Activated CD4-positive, alpha-beta memory T cell treated with anti-CD3 and anti-CD28 coated beads, Interleukin-2, amount 10 ng/mL, durations not matched to agents 7 days and 5 days (primary cell): ENCODE measurements at regions of chr14 and their contacts with region 1.

Region 1: GRCh38 chr14:74612350-74613021 is 449 bp upstream of the LTBP2 start:
- DNase-seq: peak; percentile 84
- H3K4me3 Mint-ChIP-seq: peak overlapping the region; percentile 63
- H3K27ac Mint-ChIP-seq: no peak overlapping the region
- H3K4me1 Mint-ChIP-seq: peaks cover 34% of the 10 kb centered on the region
- H3K27me3 Mint-ChIP-seq: peaks cover 58% of the 10 kb centered on the region

Region 2: GRCh38 chr14:74437496-74438053 is 174.9 kb before region 1 on chr14:
- CTCF ChIA-PET with region 1: no interaction called
- POLR2A ChIA-PET with region 1: no interaction called
- DNase-seq: no peak
- H3K4me3 Mint-ChIP-seq: no peak overlapping the region
- H3K27ac Mint-ChIP-seq: no peak overlapping the region
- H3K4me1 Mint-ChIP-seq: no peaks in the 10 kb centered on the region
- H3K27me3 Mint-ChIP-seq: peaks cover 39% of the 10 kb centered on the region

Region 3: DNA sequence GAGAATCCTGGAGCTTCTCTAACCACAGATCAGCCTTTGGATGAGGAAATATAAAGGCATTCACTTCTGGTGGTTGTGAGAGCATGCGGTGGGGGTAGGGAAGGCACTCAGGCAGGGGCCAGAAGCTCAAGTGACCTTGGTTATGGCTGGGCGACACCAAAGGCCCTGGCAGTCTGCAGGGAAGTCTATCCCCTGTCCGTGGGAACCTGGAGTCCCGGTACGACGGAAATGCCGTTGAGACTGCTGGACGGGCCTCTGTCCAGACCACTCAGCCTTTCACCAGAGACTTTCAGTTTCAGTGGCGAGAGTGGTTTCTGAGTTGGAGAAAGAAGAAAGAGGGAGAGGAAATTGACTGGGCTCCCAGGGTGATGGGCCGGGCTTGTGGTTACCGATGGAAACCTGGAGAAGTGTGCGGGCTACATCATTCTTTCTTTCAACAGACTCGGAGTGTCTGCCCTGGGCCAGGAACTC is 98.0 kb before region 1 on chr14:
- CTCF ChIA-PET with region 1: no interaction called
- POLR2A ChIA-PET with region 1: no interaction called
- DNase-seq: no peak
- H3K4me3 Mint-ChIP-seq: no peak overlapping the region
- H3K27ac Mint-ChIP-seq: no peak overlapping the region
- H3K4me1 Mint-ChIP-seq: peaks cover 9% of the 10 kb centered on the region
- H3K27me3 Mint-ChIP-seq: peaks cover 35% of the 10 kb centered on the region

Region 4: DNA sequence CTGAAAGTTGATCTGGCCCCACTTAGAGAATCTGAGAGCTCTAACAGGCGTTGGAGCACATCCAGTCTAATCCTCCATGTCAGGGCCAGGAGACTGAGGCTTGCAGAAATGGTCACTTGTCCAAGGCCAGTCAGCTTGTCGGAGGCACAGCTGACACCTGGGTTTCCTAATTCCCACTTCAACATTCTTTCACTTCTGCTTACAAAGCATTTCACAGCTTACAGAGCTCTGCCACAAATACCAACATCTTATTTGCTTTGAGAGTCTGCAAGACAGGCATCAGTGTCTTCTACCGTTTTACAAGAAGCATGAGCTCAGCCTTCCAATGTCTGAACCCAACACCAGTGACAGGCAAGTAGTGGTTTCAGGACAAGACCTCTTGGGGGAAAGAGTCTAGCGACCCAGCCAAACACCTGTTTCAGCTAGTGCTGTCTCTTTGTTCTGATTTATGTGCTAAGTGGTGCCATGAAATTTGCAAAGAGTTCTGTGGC is 87.1 kb before region 1 on chr14:
- CTCF ChIA-PET with region 1: no interaction called
- POLR2A ChIA-PET with region 1: no interaction called
- DNase-seq: no peak
- H3K4me3 Mint-ChIP-seq: no peak overlapping the region
- H3K27ac Mint-ChIP-seq: no peak overlapping the region
- H3K4me1 Mint-ChIP-seq: no peaks in the 10 kb centered on the region
- H3K27me3 Mint-ChIP-seq: peaks cover 13% of the 10 kb centered on the region

Region 5: GRCh38 chr14:74571901-74572725 is 40.4 kb before region 1 on chr14:
- CTCF ChIA-PET with region 1: interaction called, 29 read pairs
- POLR2A ChIA-PET with region 1: interaction called, 4 read pairs
- DNase-seq: no peak
- H3K4me3 Mint-ChIP-seq: no peak overlapping the region
- H3K27ac Mint-ChIP-seq: no peak overlapping the region
- H3K4me1 Mint-ChIP-seq: peaks cover 41% of the 10 kb centered on the region
- H3K27me3 Mint-ChIP-seq: peaks cover 52% of the 10 kb centered on the region

Region 6: DNA sequence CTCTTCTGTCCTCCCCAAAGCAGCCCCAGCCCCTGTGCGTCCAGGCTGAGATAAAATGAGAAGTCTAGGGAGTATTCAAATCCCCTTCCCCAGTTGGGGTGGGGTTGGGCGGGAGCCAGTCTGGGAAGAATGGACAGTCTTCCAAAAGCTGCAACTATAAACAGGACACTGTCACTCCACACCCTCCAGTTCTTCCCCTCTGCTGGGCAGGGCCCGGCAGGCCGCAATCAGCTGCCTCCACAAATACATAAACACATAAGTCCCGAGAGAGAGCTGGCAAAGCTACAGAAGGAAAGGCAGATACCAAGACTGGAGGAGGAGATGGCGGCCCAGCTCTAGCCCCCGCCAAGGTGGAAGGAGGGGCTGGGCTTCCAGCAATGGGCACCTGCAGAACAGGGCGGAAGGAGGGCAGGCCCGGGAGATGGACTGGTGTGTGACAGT is 13.1 kb before region 1 on chr14:
- CTCF ChIA-PET with region 1: interaction called, 10 read pairs
- POLR2A ChIA-PET with region 1: no interaction called
- DNase-seq: no peak
- H3K4me3 Mint-ChIP-seq: no peak overlapping the region
- H3K27ac Mint-ChIP-seq: no peak overlapping the region
- H3K4me1 Mint-ChIP-seq: no peaks in the 10 kb centered on the region
- H3K27me3 Mint-ChIP-seq: peaks cover 13% of the 10 kb centered on the region

Region 7: DNA sequence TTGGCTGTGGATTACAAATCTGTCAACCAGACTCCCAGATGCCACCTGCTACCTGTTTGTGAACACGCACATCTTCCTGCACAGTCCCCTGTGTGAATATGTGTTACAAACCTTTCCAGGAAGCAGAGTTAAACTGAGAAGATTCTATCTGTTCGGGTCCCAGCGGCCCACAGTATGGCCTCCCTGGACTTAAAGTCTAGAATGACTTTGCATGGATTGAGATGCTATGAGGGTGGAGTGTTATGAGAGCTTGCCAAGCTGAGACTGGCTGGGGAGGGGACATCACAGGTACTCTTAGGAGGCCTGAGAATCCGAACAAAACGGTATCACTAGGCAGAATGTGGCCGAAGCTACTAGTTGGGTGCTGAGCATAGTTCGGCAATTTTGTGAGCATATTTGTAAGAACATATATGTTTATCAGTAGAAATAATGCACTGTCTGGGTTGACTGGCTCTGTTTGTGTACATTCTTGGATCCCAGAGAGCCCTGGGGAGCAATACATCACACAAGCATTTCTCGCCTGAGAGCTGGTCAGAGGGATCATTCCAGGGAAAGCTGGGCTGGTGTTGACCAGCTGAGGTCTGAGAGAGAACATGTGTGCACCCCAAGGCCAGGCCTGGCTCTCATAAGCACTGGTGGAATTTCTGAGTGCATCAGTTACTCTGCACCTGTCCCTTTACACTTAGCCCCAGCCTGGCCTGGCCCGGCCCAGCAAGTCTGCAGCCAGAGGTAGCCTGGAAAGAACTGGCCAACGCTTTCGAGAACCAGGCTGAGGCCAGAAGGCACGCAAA is 29.3 kb after region 1 on chr14:
- CTCF ChIA-PET with region 1: interaction called, 20 read pairs
- POLR2A ChIA-PET with region 1: interaction called, 4 read pairs
- DNase-seq: no peak
- H3K4me3 Mint-ChIP-seq: no peak overlapping the region
- H3K27ac Mint-ChIP-seq: no peak overlapping the region
- H3K4me1 Mint-ChIP-seq: no peaks in the 10 kb centered on the region
- H3K27me3 Mint-ChIP-seq: peaks cover 17% of the 10 kb centered on the region

Region 8: DNA sequence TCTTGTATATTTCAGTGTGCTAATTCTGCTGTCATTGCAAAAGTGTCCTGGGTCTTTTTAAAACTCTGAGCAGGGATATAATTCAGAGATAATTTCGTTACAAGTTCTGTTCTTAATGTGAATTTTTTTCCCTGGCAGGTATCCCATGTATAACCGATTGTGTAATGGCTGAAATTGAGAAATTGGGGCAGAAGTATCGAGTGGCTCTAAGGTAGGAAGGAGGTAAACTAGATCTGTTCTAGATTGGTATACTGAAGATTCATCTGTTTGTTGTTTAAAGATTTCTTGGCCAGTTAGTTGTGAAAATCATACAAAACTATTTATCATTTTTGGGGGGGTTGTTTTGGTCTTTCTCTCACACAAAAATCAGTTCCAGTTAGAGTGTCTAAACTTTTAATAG is 110.6 kb after region 1 on chr14:
- CTCF ChIA-PET with region 1: no interaction called
- POLR2A ChIA-PET with region 1: no interaction called
- DNase-seq: no peak
- H3K4me3 Mint-ChIP-seq: no peak overlapping the region
- H3K27ac Mint-ChIP-seq: no peak overlapping the region
- H3K4me1 Mint-ChIP-seq: no peaks in the 10 kb centered on the region
- H3K27me3 Mint-ChIP-seq: no peaks in the 10 kb centered on the region

Region 9: GRCh38 chr14:74762917-74763802 is 150.7 kb after region 1 on chr14 and contains the start of gene YLPM1:
- CTCF ChIA-PET with region 1: interaction called, 16 read pairs
- POLR2A ChIA-PET with region 1: interaction called, 8 read pairs
- DNase-seq: peak; percentile 92
- H3K4me3 Mint-ChIP-seq: peak within 1 kb of the TSS; percentile 87
- H3K27ac Mint-ChIP-seq: peak within 1 kb of the TSS; percentile 77
- H3K4me1 Mint-ChIP-seq: peaks cover 43% of the 10 kb centered on the region
- H3K27me3 Mint-ChIP-seq: no peaks in the 10 kb centered on the region
- total RNA-seq, gene YLPM1: 52.3 to 55.4 TPM

Region 10: DNA sequence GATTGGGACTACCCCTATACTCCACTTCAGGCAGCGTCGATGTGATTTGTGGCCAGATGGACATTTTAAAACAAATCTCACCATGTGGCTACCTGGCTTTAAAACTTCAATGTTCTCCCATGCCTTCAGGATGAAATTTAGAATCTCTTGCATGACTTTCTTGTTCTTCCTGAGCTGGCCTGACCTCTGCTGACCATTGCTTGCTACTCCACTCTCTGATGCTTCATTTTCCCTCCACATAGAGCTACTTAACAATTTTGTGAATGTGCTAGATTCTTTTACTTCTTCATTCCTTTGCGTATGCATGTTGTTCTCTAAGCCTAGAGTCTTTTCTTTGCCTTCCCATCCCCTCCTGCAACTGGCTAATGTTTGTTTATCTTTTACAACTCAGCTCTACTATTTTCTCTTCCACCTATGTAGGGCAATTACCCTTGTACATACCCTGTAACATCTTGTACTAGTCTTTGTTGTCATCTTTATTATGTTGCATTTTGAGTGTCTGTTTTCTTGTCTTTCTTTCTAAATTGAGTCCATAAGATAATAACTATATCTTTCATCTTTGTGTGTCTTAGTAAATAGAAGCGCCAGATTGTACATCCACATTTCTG is 191.8 kb after region 1 on chr14:
- CTCF ChIA-PET with region 1: interaction called, 16 read pairs
- POLR2A ChIA-PET with region 1: interaction called, 3 read pairs
- DNase-seq: peak; percentile 42
- H3K4me3 Mint-ChIP-seq: no peak overlapping the region
- H3K27ac Mint-ChIP-seq: peak overlapping the region; percentile 17
- H3K4me1 Mint-ChIP-seq: no peaks in the 10 kb centered on the region
- H3K27me3 Mint-ChIP-seq: no peaks in the 10 kb centered on the region